CD8-positive, alpha-beta T cell (primary cell): ENCODE measurements at regions of chr3 and their contacts with region 1.

Region 1: GRCh38 chr3:30606301-30607031 is at the start of gene TGFBR2:
- DNase-seq: peak; percentile 59 to 92 (median 85)
- ATAC-seq: peak; percentile 70
- H3K4me3 ChIP-seq: peak within 1 kb of the TSS; percentile 94 to 96
- H3K4me3 Mint-ChIP-seq: peak within 1 kb of the TSS; percentile 94
- H3K27ac ChIP-seq: peak within 1 kb of the TSS; percentile 83 to 94
- H3K27ac Mint-ChIP-seq: peak within 1 kb of the TSS; percentile 98
- H3K4me1 ChIP-seq: peaks cover 48% of the 10 kb centered on the region
- H3K4me1 Mint-ChIP-seq: peaks cover 59% of the 10 kb centered on the region
- H3K27me3 ChIP-seq: no peaks in the 10 kb centered on the region
- H3K27me3 Mint-ChIP-seq: no peaks in the 10 kb centered on the region
- CTCF ChIP-seq: no peak
- total RNA-seq, gene TGFBR2: 191 to 197 TPM

Region 2: DNA sequence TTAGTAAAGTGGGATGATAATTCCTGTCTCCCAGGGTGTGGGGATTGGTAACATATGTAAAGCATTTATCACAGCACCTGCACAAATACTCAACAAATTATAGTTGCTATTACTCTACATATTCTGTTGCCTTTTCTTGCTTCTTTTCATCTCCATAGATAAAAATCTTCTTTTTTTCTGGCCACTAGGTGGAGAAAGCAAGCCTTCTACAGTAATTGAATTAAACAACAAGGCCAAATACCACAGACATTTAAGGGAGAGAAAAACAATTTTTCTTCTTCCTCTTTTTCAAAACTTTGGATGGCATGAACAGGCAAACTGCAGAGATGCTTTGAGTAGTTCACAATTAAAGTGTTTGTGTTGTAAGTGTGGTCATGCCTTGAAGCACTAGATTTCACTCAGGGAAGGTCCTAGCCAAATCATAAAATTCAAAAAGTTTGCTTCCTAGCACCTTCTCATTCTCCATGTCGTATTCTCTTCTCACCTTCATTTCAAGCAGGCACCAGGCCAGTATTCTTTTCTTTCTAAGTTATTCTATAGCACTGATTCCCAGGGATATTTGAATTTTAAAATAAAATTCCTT is 493.5 kb before region 1 on chr3:
- CTCF ChIA-PET with region 1: no interaction called
- POLR2A ChIA-PET with region 1: no interaction called
- intact Hi-C with region 1: loop called in 1 of 2 experiments (anchors 10 kb)
- DNase-seq: peak in 2 of 9 experiments; percentile 43 to 61
- ATAC-seq: no peak
- H3K4me3 ChIP-seq: no peak overlapping the region
- H3K4me3 Mint-ChIP-seq: no peak overlapping the region
- H3K27ac ChIP-seq: no peak overlapping the region
- H3K27ac Mint-ChIP-seq: no peak overlapping the region
- H3K4me1 ChIP-seq: no peaks in the 10 kb centered on the region
- H3K4me1 Mint-ChIP-seq: peaks cover 6% of the 10 kb centered on the region
- H3K27me3 ChIP-seq: no peaks in the 10 kb centered on the region
- H3K27me3 Mint-ChIP-seq: no peaks in the 10 kb centered on the region
- CTCF ChIP-seq: peak; percentile 78

Region 3: DNA sequence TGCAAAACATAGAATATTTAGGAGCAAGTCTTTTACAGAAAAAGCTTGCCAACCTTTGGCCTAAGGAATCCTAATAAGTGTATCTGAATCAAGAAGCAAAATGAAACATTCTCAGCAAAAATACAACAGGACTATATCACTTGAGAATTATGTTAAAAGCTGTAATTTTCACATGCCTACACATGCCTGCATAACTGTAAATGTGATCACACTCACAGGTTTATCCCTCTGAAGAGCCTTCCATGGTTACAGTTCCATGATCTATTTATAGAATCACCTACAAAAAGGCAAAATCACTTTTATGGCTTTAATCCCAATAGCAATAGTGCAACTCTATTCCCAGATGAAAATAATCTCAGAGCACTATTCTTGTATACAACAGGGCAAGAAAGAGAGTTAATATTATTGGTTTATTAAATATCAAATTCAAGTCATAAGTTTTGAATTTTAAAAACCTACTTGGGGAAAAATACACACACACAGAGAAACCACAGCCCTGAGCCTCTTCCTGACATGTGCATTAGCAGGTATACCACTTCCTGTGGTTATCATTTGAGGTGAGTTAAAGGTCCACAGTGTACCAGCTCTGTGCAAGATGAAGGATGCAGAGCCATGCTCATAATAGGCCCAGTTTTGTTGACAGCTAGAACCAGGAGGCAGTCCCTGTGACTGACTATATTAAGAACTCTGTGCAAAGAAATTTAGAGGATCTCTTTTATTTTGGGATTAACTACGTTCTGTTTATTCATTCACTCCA is 252.6 kb before region 1 on chr3:
- CTCF ChIA-PET with region 1: no interaction called
- POLR2A ChIA-PET with region 1: interaction called, 9 read pairs
- intact Hi-C with region 1: loop called (anchors 2 to 5 kb)
- DNase-seq: peak; percentile 3 to 91 (median 53)
- ATAC-seq: peak; percentile 98
- H3K4me3 ChIP-seq: peak overlapping the region in 1 of 2 experiments; percentile 2
- H3K4me3 Mint-ChIP-seq: peak overlapping the region; percentile 64
- H3K27ac ChIP-seq: peak overlapping the region in 1 of 2 experiments; percentile 25
- H3K27ac Mint-ChIP-seq: peak overlapping the region; percentile 94
- H3K4me1 ChIP-seq: peaks cover 82% of the 10 kb centered on the region
- H3K4me1 Mint-ChIP-seq: peaks cover 85% of the 10 kb centered on the region
- H3K27me3 ChIP-seq: no peaks in the 10 kb centered on the region
- H3K27me3 Mint-ChIP-seq: no peaks in the 10 kb centered on the region
- CTCF ChIP-seq: no peak

Region 4: GRCh38 chr3:30623351-30623750 is 16.9 kb after region 1 on chr3:
- CTCF ChIA-PET with region 1: interaction called, 18 read pairs
- POLR2A ChIA-PET with region 1: interaction called, 58 read pairs
- intact Hi-C with region 1: no loop called
- DNase-seq: no peak
- ATAC-seq: no peak
- H3K4me3 ChIP-seq: no peak overlapping the region
- H3K4me3 Mint-ChIP-seq: peak overlapping the region; percentile 63
- H3K27ac ChIP-seq: peak overlapping the region in 1 of 2 experiments; percentile 38
- H3K27ac Mint-ChIP-seq: peak overlapping the region; percentile 79
- H3K4me1 ChIP-seq: peaks cover 94% of the 10 kb centered on the region
- H3K4me1 Mint-ChIP-seq: peaks cover 91% of the 10 kb centered on the region
- H3K27me3 ChIP-seq: no peaks in the 10 kb centered on the region
- H3K27me3 Mint-ChIP-seq: no peaks in the 10 kb centered on the region
- CTCF ChIP-seq: no peak

Region 5: GRCh38 chr3:30638685-30639412 is 32.4 kb after region 1 on chr3:
- CTCF ChIA-PET with region 1: interaction called, 4 read pairs
- POLR2A ChIA-PET with region 1: interaction called, 15 read pairs
- intact Hi-C with region 1: loop called in 1 of 2 experiments (anchors 5 kb)
- DNase-seq: no peak
- ATAC-seq: no peak
- H3K4me3 ChIP-seq: peak overlapping the region in 1 of 2 experiments; percentile 25
- H3K4me3 Mint-ChIP-seq: peak overlapping the region; percentile 55
- H3K27ac ChIP-seq: peak overlapping the region in 1 of 2 experiments; percentile 77
- H3K27ac Mint-ChIP-seq: peak overlapping the region; percentile 94
- H3K4me1 ChIP-seq: peaks cover 100% of the 10 kb centered on the region
- H3K4me1 Mint-ChIP-seq: peaks cover 97% of the 10 kb centered on the region
- H3K27me3 ChIP-seq: no peaks in the 10 kb centered on the region
- H3K27me3 Mint-ChIP-seq: no peaks in the 10 kb centered on the region
- CTCF ChIP-seq: no peak

Region 6: DNA sequence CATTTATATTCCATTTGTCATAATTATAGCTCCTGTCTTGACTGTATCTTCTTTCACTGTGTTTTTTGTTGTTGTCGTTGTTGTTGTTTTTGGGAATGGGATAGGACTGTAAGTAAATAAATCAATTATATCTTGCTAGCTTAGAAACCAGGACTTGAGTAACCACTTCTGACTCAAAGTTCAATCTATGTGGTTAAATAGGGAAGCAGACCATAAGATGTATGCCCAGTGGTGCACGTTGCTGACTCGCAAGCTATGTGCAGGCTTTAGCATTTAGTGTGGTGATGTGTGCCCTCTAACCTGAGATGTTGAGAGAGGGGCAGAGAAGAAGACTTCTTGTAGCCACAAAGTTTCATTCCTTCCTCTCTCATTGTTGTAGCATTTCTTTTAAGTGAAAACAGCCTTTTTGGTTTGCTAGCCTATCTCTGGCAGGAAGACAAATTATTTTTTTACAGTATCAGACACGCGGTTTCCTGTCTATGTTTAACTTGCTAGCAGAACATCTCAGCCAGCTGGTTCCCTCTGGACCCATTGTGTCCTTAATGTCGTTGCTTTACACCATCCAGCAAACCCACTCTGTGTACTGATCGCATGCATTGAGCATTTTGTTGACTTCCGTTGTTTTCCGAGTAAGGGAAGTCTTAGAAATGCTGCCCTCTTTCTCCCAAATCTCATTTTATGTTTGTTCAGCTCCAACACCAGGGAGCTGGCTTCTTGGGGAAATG is 52.0 kb after region 1 on chr3:
- CTCF ChIA-PET with region 1: interaction called, 21 read pairs
- POLR2A ChIA-PET with region 1: interaction called, 61 read pairs
- intact Hi-C with region 1: loop called (anchors 2 kb)
- DNase-seq: peak in 7 of 9 experiments; percentile 31 to 85 (median 70)
- ATAC-seq: peak; percentile 54
- H3K4me3 ChIP-seq: peak overlapping the region in 1 of 2 experiments; percentile 3
- H3K4me3 Mint-ChIP-seq: peak overlapping the region; percentile 70
- H3K27ac ChIP-seq: peak overlapping the region; percentile 78 to 83
- H3K27ac Mint-ChIP-seq: peak overlapping the region; percentile 98
- H3K4me1 ChIP-seq: peaks cover 99% of the 10 kb centered on the region
- H3K4me1 Mint-ChIP-seq: peaks cover 99% of the 10 kb centered on the region
- H3K27me3 ChIP-seq: no peaks in the 10 kb centered on the region
- H3K27me3 Mint-ChIP-seq: no peaks in the 10 kb centered on the region
- CTCF ChIP-seq: no peak

Region 7: GRCh38 chr3:30855400-30856292 is 249.2 kb after region 1 on chr3:
- CTCF ChIA-PET with region 1: no interaction called
- POLR2A ChIA-PET with region 1: no interaction called
- intact Hi-C with region 1: no loop called
- DNase-seq: no peak
- ATAC-seq: no peak
- H3K4me3 ChIP-seq: no peak overlapping the region
- H3K4me3 Mint-ChIP-seq: no peak overlapping the region
- H3K27ac ChIP-seq: no peak overlapping the region
- H3K27ac Mint-ChIP-seq: no peak overlapping the region
- H3K4me1 ChIP-seq: no peaks in the 10 kb centered on the region
- H3K4me1 Mint-ChIP-seq: no peaks in the 10 kb centered on the region
- H3K27me3 ChIP-seq: peaks cover 0 to 2% of the 10 kb centered on the region in 2 experiments
- H3K27me3 Mint-ChIP-seq: no peaks in the 10 kb centered on the region
- CTCF ChIP-seq: no peak